ENCODE measurements at regions of chr7 and their contacts with region 1.

Region 1: GRCh38 chr7:51162724-51163329 is 153.8 kb downstream of the COBL start:
- DNase-seq: peak; percentile 94
- H3K4me3 ChIP-seq: no peak overlapping the region
- H3K27ac ChIP-seq: no peak overlapping the region
- H3K4me1 ChIP-seq: peaks cover 6 to 18% (median 15%) of the 10 kb centered on the region in 4 donors
- H3K27me3 ChIP-seq: no peaks in the 10 kb centered on the region
- CTCF ChIP-seq: peak; percentile 72 to 82 (median 82)
- EP300 ChIP-seq: no peak
- POLR2A ChIP-seq: no peak

Region 2: DNA sequence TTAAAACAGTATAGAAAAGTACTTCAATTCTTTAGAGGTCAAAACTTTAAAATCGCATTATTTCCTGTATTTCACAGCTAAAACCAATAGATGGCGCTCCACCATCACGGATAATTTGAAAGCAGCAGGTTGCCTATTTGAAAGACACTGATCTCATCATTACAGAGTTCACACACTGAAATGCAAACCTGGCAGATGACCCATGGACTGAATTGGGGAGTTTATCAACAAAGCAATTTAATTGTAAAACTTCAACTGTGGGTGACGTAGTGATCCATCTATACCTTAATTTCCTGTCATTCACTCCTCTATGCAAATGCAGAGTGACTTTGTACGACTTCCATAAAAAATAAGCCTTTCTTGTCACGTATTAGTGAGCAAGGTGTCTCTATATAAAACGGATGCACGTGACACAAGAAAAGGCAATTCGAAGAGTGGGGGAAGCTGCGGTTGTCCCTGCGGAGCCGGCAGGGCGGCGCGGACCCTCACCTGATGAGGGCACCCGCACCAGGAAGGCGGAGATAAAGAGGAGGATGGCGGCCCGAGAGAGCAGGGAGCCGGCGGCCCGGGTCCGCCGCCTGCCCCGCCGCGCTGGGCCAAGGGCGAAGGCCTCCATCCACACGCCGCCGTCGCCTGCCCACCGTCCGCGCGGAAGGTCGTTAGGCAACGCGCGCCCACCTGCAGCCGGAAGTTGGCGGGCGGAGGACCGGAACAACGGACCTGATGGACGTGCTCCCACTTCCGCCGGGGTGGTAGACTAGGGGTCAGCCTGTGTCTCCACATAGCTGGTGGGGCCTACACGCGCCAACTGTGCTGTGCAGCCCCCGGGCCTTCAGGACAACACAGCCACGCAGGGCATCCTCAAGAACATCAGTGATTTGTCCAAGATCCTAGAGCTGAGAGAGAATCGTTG is 1070.0 kb before region 1 on chr7 and contains the start of gene ZPBP:
- intact Hi-C with region 1: loop called (anchors 10 kb)
- DNase-seq: no peak
- H3K4me3 ChIP-seq: peak within 1 kb of the TSS; percentile 50 to 58 (median 52)
- H3K27ac ChIP-seq: no peak within 1 kb of the TSS
- H3K4me1 ChIP-seq: peaks cover 0 to 9% (median 7%) of the 10 kb centered on the region in 4 donors
- H3K27me3 ChIP-seq: no peaks in the 10 kb centered on the region
- CTCF ChIP-seq: peak; percentile 61 to 69 (median 65)
- EP300 ChIP-seq: no peak
- POLR2A ChIP-seq: no peak
- total RNA-seq, gene ZPBP: not detected

Region 3: GRCh38 chr7:50147951-50148808 is 1014.6 kb before region 1 on chr7:
- intact Hi-C with region 1: loop called (anchors 5 kb)
- DNase-seq: no peak
- H3K4me3 ChIP-seq: no peak overlapping the region
- H3K27ac ChIP-seq: no peak overlapping the region
- H3K4me1 ChIP-seq: no peaks in the 10 kb centered on the region
- H3K27me3 ChIP-seq: no peaks in the 10 kb centered on the region
- CTCF ChIP-seq: no peak
- EP300 ChIP-seq: no peak
- POLR2A ChIP-seq: no peak

Region 4: DNA sequence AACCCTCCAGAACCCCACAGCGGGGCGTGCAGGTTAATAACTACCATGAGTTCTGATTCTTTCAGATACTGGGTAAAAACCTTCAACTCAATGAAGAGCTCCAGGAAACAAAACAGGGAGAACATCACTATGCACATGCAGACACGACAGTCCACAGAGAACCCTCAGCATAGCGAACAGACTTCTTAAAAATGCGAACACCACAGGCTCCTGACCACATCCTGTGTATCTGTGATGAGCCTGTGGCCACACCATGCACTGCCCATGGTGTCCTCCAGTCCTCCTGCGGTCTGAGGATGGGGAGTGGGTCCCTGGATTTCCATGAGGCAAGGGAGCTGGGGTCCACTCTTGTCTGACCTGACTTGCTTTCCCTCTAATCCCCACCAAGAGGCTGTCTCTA is 46.6 kb after region 1 on chr7:
- intact Hi-C with region 1: no loop called
- DNase-seq: no peak
- H3K4me3 ChIP-seq: no peak overlapping the region
- H3K27ac ChIP-seq: no peak overlapping the region
- H3K4me1 ChIP-seq: no peaks in the 10 kb centered on the region
- H3K27me3 ChIP-seq: no peaks in the 10 kb centered on the region
- CTCF ChIP-seq: no peak
- EP300 ChIP-seq: no peak
- POLR2A ChIP-seq: no peak

Region 5: DNA sequence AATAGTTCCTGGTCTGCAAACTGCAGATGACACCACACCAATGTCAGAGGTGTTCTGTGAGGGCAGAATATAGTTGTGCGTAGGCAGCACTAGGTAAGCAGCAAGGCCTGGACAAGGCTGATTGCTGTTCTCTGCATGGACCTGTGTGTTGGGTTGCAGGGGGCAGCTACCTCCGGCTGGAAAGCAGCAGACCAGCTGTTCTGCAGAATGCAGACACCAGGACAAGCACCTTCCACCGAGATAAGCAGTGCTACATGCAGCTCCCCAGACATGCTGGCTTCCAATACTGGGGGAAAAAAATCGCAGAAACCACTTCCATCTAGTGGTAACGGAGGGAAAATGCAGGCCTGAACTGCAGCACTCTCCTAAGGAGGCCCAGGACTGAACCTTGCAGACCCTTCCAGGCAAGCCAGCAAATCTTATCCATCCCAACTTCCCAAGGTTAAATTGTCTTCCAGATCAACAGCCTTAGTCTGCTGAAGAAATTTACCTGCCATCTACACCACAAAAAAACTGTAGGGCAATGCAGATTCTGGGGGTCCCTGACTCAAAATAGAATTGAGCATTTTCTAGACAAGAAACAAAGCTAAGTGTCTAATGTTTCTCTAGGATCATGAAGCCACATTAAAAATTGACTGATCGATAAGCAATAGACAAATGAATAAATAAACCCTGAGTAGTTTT is 204.2 kb after region 1 on chr7:
- intact Hi-C with region 1: loop called (anchors 2 kb)
- DNase-seq: no peak
- H3K4me3 ChIP-seq: no peak overlapping the region
- H3K27ac ChIP-seq: no peak overlapping the region
- H3K4me1 ChIP-seq: peaks cover 0 to 4% (median 0%) of the 10 kb centered on the region in 4 donors
- H3K27me3 ChIP-seq: no peaks in the 10 kb centered on the region
- CTCF ChIP-seq: peak; percentile 73 to 82 (median 74)
- EP300 ChIP-seq: no peak
- POLR2A ChIP-seq: no peak

Measured in esophagus muscularis mucosa (tissue), 4 donors.